Motor neuron (in vitro differentiated cells): ENCODE measurements at regions of chr6 and their contacts with region 1.

Region 1: DNA sequence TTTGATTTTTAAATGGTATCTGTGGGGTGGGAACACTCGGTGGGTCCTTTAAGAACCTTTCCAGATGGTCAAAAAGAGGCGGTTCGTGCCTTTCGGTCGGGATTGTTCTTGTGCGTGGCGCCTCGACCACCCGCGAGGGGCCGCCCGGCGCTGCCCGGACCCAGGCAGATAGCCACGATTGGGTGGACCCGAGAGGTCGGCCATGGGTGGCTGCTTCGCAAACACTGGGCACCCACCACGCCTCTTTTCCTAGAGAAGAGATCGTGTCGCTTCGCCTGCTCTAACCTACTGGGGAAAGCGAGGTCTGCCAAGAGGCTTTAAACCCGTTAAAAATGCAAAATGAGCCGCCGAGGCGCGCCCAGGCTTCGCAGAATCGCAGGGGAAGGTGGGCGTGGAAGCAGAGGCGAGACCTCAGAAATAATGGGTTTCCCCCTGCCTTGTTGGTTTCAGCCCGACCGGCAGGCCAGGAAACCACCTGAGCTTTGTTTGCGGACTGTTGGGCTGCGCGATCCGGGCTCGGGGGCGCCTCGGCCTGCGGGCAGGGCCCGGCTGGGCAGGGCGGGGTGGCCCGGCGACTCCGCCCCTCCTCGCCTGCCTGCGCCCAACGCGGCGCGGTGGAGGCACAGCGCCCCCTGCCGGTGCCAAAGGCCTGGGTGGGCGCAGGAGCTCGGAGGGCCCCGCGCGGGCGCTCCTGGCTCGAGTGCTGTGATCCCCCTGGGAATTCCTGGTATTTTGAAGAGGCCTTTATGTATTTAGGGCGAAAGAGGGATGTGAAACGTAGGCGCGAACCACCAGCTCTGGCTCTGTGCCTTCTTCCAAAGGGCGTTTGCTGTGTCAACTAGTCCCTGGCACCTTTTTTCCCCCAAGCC is 1.6 kb downstream of the MARCKS start:
- ATAC-seq: peak; percentile 60 to 76 (median 72)
- H3K4me3 ChIP-seq: peak overlapping the region; percentile 71 to 96 (median 75)
- H3K27ac ChIP-seq: peak overlapping the region; percentile 99
- H3K4me1 ChIP-seq: peaks cover 0 to 8% of the 10 kb centered on the region in 2 donors

Region 2: DNA sequence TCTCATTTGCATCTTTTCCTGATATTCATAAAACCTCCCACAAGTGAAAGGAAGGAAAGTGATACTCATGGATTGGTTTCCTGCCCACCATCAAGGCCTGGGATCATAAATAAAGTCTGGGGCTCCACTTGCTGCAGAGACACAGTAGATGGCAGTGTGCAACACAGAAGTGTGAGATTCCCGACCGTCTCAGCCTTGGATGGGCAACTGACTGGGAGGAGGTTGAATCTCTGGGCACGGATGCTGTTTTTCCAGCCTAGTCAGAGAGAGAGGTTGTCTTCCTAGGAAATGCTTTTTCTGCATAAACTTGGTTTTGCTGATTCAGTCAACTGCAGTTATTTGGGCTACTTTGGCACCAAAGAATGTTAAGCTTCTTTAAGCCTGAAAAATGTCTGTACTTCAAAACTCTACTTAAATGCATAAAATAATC is 1521.5 kb before region 1 on chr6:
- in situ Hi-C with region 1: loop called in 1 of 9 experiments (anchors 25 kb)
- ATAC-seq: peak; percentile 91 to 100 (median 100)
- H3K4me3 ChIP-seq: no peak overlapping the region
- H3K27ac ChIP-seq: no peak overlapping the region
- H3K4me1 ChIP-seq: peaks cover 7 to 11% of the 10 kb centered on the region in 2 donors

Region 3: DNA sequence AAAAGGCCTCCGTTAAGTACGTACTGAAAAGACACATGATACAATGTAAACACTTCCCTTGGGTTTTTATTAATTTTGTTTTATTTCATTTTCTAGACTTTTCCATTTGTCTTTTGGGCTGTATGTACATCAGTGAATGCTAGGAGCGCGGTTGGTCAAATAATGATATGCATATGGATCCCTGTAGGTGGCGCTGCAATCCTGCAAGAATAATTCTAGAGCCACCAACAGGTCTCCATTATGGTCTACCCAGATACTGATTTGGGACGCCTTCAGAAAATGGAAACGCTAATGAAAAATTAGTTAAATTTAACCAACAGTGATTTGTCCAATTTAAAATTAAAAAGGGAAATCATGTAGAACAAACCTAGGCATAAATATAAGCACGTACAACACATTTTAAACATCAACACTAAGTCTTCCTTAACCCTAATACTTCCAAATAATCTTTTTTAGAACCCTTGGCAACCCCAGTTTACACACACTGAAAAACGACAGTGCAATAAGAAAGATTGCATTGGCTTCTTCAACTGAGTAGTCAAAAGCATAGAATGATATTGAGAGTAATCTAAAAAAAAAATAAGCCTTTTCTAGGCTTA is 1078.1 kb before region 1 on chr6:
- in situ Hi-C with region 1: loop called in 3 of 9 experiments (anchors 25 kb)
- ATAC-seq: peak; percentile 82 to 96 (median 92)
- H3K4me3 ChIP-seq: no peak overlapping the region
- H3K27ac ChIP-seq: no peak overlapping the region
- H3K4me1 ChIP-seq: peaks cover 9 to 10% of the 10 kb centered on the region in 2 donors

Region 4: DNA sequence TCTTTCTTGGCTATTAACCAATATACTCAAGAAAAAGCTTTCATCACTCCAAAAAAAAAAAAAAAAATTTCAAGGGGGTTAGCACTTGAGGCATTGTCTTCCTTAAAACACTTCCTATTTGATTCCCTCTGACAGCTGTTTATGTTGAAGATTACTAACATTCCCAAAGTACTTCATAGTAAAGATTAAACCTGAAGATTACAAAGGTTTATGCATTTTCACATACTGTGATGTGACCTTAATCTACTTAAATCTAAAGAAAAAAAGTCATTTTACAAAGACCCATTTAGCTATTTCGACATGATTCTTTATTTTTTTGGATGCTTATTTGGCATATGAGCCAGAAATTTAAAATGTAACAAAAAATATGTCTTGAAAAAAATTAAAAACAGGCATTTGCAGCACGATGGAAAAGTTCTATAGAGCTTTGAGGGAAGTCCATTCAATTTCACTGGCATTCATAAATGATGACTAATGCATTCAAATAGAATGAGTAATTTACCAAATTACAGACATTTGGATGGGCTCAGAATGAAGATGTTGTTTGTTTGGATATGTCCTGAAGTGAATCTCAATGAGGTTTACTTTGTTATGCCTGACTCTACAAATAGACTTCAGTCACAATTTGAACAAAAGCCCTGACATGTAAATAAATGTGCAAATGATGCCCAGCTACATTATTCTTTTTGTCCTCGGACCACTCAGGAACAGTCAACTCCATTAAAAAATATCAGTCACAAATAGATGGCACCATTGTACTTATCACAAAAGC is 676.2 kb before region 1 on chr6:
- in situ Hi-C with region 1: loop called in 1 of 9 experiments (anchors 25 kb)
- ATAC-seq: peak; percentile 14 to 96 (median 78)
- H3K4me3 ChIP-seq: no peak overlapping the region
- H3K27ac ChIP-seq: no peak overlapping the region
- H3K4me1 ChIP-seq: peaks cover 7 to 12% of the 10 kb centered on the region in 2 donors

Region 5: DNA sequence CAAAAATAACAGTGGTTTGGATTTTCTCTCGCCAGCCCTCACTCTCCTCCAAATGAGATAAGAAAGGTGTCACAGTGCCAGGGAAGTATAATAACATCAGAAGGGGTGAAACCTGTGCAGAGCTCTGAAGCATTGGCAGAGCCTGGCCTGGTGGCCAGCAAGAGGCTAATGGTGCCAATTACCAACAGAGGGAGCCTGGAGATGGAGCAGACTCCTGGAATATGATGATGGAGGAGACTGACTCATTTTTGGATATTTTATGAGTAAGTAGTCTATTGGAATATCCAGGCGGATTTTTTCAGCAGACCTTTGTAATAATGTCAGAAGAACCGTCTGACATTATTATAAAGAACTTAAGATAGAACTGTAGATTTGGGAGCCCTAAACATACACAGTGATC is 444.2 kb before region 1 on chr6:
- in situ Hi-C with region 1: loop called in 1 of 9 experiments (anchors 25 kb)
- ATAC-seq: peak in 4 of 8 experiments; percentile 69 to 100 (median 96)
- H3K4me3 ChIP-seq: no peak overlapping the region
- H3K27ac ChIP-seq: no peak overlapping the region
- H3K4me1 ChIP-seq: no peaks in the 10 kb centered on the region

Region 6: DNA sequence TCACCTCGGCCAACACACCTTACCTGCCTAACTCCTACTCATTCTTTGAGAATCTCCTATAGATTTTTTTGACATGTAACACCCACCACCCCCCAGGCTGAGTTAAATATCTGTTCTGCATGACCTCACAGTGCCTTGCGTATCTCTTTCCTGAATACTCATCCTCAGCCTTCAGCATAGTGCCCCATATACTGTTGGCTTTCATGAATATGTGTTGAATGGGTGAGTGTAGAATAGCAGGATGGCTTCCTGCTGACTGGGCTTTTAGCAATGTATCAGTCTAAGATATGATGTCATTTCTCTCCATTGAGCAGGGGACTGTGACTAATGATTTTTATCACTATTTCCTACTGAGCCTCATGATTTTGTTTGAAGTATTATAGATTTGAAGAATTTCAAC is 363.2 kb before region 1 on chr6:
- in situ Hi-C with region 1: loop called in 1 of 9 experiments (anchors 25 kb)
- ATAC-seq: peak in 7 of 8 experiments; percentile 61 to 98 (median 81)
- H3K4me3 ChIP-seq: no peak overlapping the region
- H3K27ac ChIP-seq: no peak overlapping the region
- H3K4me1 ChIP-seq: no peaks in the 10 kb centered on the region

Region 7: DNA sequence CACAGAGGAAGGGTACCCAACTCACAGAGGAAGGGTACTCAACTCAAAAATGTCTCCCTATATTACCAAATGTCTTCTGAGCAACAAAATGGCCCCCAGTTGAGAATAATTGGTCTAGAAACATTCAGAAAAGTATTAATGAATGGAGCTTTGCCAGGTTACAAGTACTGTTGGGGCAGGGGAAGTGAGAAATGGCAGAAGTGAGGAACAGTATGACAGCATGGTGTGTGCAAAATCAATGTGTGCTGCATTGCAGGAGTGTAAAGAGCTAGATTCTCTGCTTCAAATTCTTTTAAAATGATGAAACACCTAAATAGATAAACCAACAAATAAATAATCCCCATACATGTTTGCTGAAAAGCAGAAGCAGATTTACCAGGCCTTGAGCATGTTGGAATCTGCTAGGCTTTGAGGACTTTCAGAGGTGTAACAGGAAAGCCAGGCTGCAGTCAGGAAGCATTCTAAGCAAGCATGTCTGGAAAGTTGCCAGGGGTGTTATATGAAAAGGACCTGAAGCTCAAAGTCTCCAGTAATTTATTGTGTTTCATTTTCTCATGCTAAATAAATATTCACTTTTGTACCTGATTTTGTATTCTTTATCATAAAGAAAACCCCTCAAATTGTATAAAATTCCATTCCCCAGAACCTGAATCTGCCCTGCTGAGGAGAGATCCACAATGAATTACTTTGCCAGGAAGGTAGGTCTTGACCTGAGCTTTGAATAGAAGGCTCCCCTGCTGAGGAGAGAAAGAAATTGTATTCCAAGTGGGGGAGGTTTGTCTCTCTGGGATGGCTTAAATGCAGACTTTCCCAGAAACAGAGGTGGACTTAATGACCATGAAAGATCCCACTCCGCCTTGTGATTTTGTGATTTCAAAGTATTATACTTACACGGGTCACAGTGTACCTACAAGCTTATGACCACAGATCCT is 266.6 kb before region 1 on chr6:
- in situ Hi-C with region 1: loop called in 1 of 9 experiments (anchors 25 kb)
- ATAC-seq: peak in 4 of 8 experiments; percentile 26 to 50 (median 36)
- H3K4me3 ChIP-seq: no peak overlapping the region
- H3K27ac ChIP-seq: no peak overlapping the region
- H3K4me1 ChIP-seq: peaks cover 29 to 37% of the 10 kb centered on the region in 2 donors

Region 8: DNA sequence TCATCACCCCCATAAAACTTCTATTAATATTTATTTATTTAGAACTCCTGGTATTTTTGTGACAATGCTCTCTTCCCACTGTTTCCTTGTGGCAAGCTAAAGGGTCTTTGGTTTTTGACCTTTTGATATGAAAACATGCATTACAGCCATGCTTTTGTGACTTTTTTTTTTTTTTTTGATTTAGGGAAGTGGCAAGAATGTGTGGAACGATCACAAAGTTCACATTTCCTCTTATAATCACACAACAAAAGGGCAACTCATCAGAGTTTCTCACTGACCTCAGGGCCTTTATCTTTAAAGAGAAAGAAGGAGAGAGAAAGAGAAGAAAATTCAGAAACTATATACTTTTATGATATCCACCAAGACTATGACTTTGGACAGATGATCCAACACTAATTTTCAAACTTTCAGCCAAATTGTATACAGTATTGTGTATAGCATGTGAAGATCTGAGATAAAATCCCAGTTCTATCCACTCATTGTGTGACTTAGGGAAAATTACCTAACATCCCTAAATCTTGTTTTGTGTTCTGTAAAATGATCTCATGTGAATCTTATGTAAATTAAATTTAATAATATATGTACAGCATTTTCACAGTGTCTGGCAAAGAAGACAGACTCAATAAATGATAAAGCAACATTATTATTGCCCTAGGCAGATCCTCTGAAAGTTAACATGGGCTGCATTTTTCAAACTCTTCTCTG is 108.4 kb before region 1 on chr6:
- in situ Hi-C with region 1: no loop called
- ATAC-seq: no peak
- H3K4me3 ChIP-seq: no peak overlapping the region
- H3K27ac ChIP-seq: no peak overlapping the region
- H3K4me1 ChIP-seq: no peaks in the 10 kb centered on the region

Region 9: GRCh38 chr6:114144887-114145851 is 286.5 kb after region 1 on chr6:
- in situ Hi-C with region 1: no loop called
- ATAC-seq: no peak
- H3K4me3 ChIP-seq: no peak overlapping the region
- H3K27ac ChIP-seq: no peak overlapping the region
- H3K4me1 ChIP-seq: peaks cover 0 to 12% of the 10 kb centered on the region in 2 donors

Region 10: GRCh38 chr6:114195631-114196403 is 337.1 kb after region 1 on chr6:
- in situ Hi-C with region 1: no loop called
- ATAC-seq: peak in 1 of 8 experiments; percentile 19
- H3K4me3 ChIP-seq: no peak overlapping the region
- H3K27ac ChIP-seq: no peak overlapping the region
- H3K4me1 ChIP-seq: peaks cover 0 to 7% of the 10 kb centered on the region in 2 donors